SK-N-SH (cell line): ENCODE measurements at regions of chr3 and their contacts with region 1.

Region 1: GRCh38 chr3:49093853-49094767 is at the start of gene QRICH1:
- DNase-seq: peak; percentile 92
- H3K4me3 ChIP-seq: peak within 1 kb of the TSS; percentile 76 to 98
- H3K27ac ChIP-seq: peak within 1 kb of the TSS; percentile 95 to 96
- H3K4me1 ChIP-seq: peaks cover 15 to 23% of the 10 kb centered on the region in 2 experiments; a peak in 3 of 4 replicates
- H3K27me3 ChIP-seq: no peaks in the 10 kb centered on the region
- CTCF ChIP-seq: peak; percentile 66
- EP300 ChIP-seq: no peak
- RAD21 ChIP-seq: peak; percentile 51
- polyA plus RNA-seq, gene QRICH1: 58.5 and 67.0 TPM in 2 replicates

Region 2: GRCh38 chr3:48409291-48410201 is 684.6 kb before region 1 on chr3:
- CTCF ChIA-PET with region 1: no interaction called
- POLR2A ChIA-PET with region 1: no interaction called
- DNase-seq: peak; percentile 10
- H3K4me3 ChIP-seq: no peak overlapping the region
- H3K27ac ChIP-seq: no peak overlapping the region
- H3K4me1 ChIP-seq: no peaks in the 10 kb centered on the region
- H3K27me3 ChIP-seq: no peaks in the 10 kb centered on the region
- CTCF ChIP-seq: no peak
- EP300 ChIP-seq: no peak
- RAD21 ChIP-seq: no peak

Region 3: DNA sequence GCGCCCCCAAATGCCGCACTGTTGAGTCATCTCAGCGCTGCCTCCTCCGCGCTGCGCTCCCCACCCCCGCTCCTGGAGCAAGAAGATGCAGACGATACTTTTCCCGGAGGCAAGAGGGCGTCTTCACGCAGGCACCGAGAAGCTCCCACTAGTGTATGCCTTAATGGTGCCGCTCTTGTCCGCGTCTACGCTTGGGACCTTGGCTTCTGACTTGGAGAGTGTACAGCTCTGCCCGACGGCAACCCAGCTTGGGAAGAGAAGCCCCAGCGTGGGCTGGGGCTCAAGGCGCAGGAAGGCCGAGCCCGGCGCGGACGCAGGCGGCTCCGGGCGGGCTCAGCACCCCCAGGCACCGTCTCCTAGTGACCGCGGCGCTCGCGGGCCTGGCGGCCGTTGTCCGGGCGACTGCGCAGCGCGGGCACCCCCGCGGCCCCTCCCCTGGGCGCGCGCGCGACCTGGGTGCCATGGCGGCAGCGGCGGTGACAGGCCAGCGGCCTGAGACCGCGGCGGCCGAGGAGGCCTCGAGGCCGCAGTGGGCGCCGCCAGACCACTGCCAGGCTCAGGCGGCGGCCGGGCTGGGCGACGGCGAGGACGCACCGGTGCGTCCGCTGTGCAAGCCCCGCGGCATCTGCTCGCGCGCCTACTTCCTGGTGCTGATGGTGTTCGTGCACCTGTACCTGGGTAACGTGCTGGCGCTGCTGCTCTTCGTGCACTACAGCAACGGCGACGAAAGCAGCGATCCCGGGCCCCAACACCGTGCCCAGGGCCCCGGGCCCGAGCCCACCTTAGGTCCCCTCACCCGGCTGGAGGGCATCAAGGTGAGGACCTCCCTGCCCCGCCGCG is 104.1 kb before region 1 on chr3 and contains the start of gene P4HTM:
- CTCF ChIA-PET with region 1: interaction called, 15 read pairs
- POLR2A ChIA-PET with region 1: no interaction called
- DNase-seq: no peak
- H3K4me3 ChIP-seq: peak within 1 kb of the TSS; percentile 35 to 63; a peak in 3 of 4 replicates
- H3K27ac ChIP-seq: peak within 1 kb of the TSS; percentile 12 to 88; a peak in 3 of 4 replicates
- H3K4me1 ChIP-seq: peaks cover 0 to 2% of the 10 kb centered on the region in 2 experiments; a peak in 1 of 4 replicates
- H3K27me3 ChIP-seq: no peaks in the 10 kb centered on the region
- CTCF ChIP-seq: peak; percentile 34
- EP300 ChIP-seq: peak in 1 of 2 experiments; percentile 26; a peak in 1 of 4 replicates
- RAD21 ChIP-seq: no peak
- polyA plus RNA-seq, gene P4HTM: 21.0 and 21.4 TPM in 2 replicates

Region 4: GRCh38 chr3:49021813-49022687 is 72.1 kb before region 1 on chr3 and contains the start of gene NDUFAF3:
- CTCF ChIA-PET with region 1: interaction called, 16 read pairs
- POLR2A ChIA-PET with region 1: interaction called, 31 read pairs
- DNase-seq: peak; percentile 95
- H3K4me3 ChIP-seq: peak within 1 kb of the TSS; percentile 87 to 94
- H3K27ac ChIP-seq: peak within 1 kb of the TSS; percentile 99
- H3K4me1 ChIP-seq: peaks cover under 1 to 35% of the 10 kb centered on the region in 2 experiments; a peak in 1 of 4 replicates
- H3K27me3 ChIP-seq: no peaks in the 10 kb centered on the region
- CTCF ChIP-seq: peak; percentile 88
- EP300 ChIP-seq: peak in 1 of 2 experiments; percentile 33; a peak in 1 of 4 replicates
- RAD21 ChIP-seq: 0 out of 2 replicates have a peak, but pooled peaks have one; percentile 19
- polyA plus RNA-seq, gene NDUFAF3: 85.3 and 104 TPM in 2 replicates

Region 5: DNA sequence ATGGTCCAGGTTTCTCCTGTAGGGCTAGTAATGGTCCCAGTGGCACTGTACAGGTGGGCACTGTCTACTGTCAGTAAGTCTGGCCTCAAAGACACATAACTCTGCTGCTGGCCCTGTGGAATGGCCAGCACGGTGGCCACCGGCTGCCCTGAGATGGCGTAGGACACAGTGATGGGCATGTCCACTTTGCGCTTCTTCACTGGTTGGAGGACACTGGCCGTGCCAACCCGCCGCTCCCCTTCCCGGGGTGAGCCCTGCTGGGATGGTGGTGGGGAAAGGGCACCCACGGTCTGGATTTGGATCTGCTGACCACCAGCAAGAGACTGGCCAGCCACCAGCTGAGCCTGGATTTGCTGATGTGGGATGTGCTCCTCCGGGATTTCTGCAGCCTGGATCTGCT is 36.8 kb before region 1 on chr3:
- CTCF ChIA-PET with region 1: no interaction called
- POLR2A ChIA-PET with region 1: no interaction called
- DNase-seq: no peak
- H3K4me3 ChIP-seq: no peak overlapping the region
- H3K27ac ChIP-seq: no peak overlapping the region
- H3K4me1 ChIP-seq: no peaks in the 10 kb centered on the region
- H3K27me3 ChIP-seq: no peaks in the 10 kb centered on the region
- CTCF ChIP-seq: no peak
- EP300 ChIP-seq: no peak
- RAD21 ChIP-seq: no peak

Region 6: GRCh38 chr3:49104483-49105291 is 10.6 kb after region 1 on chr3 and contains the start of gene QARS1:
- CTCF ChIA-PET with region 1: interaction called, 7 read pairs
- POLR2A ChIA-PET with region 1: interaction called, 27 read pairs
- DNase-seq: peak; percentile 98
- H3K4me3 ChIP-seq: peak within 1 kb of the TSS; percentile 87 to 99
- H3K27ac ChIP-seq: peak within 1 kb of the TSS; percentile 80 to 93
- H3K4me1 ChIP-seq: peaks cover 6 to 18% of the 10 kb centered on the region in 2 experiments; a peak in 2 of 4 replicates
- H3K27me3 ChIP-seq: no peaks in the 10 kb centered on the region
- CTCF ChIP-seq: no peak
- EP300 ChIP-seq: peak in 1 of 2 experiments; percentile 6; a peak in 1 of 4 replicates
- RAD21 ChIP-seq: peak; percentile 11; the same call in 1 of the 2 replicates
- polyA plus RNA-seq, gene QARS1: 311 and 381 TPM in 2 replicates

Region 7: GRCh38 chr3:49133226-49133951 is 39.3 kb after region 1 on chr3:
- CTCF ChIA-PET with region 1: interaction called, 5 read pairs
- POLR2A ChIA-PET with region 1: interaction called, 22 read pairs
- DNase-seq: peak; percentile 89
- H3K4me3 ChIP-seq: peak overlapping the region; percentile 67 to 81
- H3K27ac ChIP-seq: peak overlapping the region; percentile 83 to 91
- H3K4me1 ChIP-seq: peaks cover 0 to 18% of the 10 kb centered on the region in 2 experiments; a peak in 1 of 4 replicates
- H3K27me3 ChIP-seq: no peaks in the 10 kb centered on the region
- CTCF ChIP-seq: no peak
- EP300 ChIP-seq: peak in 1 of 2 experiments; percentile 30; a peak in 2 of 4 replicates
- RAD21 ChIP-seq: no peak